ENCODE measurements at regions of chr2 and their contacts with region 1.

Region 1: GRCh38 chr2:143489145-143489544 is 359.9 kb downstream of the ARHGAP15 start:
- DNase-seq: no peak
- H3K4me3 ChIP-seq: no peak overlapping the region
- H3K27ac ChIP-seq: no peak overlapping the region
- H3K4me1 ChIP-seq: no peaks in the 10 kb centered on the region
- CTCF ChIP-seq: no peak

Region 2: DNA sequence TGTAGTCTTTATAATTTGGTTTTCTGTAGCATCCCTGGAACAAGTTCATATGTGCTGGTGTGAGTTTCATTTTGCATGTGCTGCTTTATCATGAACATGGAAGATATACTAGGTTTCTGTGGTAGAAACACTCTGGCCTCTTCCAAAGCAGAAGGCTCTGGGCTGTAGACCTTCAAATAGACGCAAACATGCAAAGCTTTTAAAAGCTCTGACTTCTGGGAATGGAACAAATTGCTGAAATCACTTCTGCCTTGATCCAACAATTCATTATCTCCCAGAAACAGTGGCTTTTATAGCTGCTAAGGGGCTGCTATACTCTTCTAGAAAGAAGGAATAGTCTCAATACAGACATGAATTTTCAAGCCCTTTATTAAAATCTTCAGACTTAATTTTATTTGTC is 1740.5 kb before region 1 on chr2:
- CTCF ChIA-PET with region 1: no interaction called
- POLR2A ChIA-PET with region 1: no interaction called
- intact Hi-C with region 1: loop called (anchors 10 kb)
- DNase-seq: no peak
- H3K4me3 ChIP-seq: no peak overlapping the region
- H3K27ac ChIP-seq: no peak overlapping the region
- H3K4me1 ChIP-seq: no peaks in the 10 kb centered on the region
- CTCF ChIP-seq: no peak

Region 3: DNA sequence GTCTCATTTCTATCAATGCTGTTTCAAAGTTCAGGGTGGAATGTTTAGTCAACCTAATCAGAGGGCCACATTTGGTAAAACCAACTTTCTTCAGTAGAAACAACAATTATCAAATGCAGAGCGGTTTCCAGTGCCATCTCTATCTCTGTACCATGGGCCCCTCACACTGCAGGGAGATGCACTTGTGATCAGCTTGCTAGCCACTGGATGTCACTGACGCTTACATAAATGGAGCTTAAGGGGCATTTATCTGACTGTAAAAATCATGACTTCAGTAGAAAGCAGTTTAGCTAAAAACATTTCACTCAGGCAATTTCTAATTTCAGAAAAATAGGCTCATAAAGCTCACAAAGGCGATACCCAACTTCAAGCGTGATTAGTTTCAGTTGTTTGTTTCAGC is 352.8 kb after region 1 on chr2:
- CTCF ChIA-PET with region 1: no interaction called
- POLR2A ChIA-PET with region 1: no interaction called
- intact Hi-C with region 1: no loop called
- DNase-seq: peak; percentile 15
- H3K4me3 ChIP-seq: no peak overlapping the region
- H3K27ac ChIP-seq: no peak overlapping the region
- H3K4me1 ChIP-seq: no peaks in the 10 kb centered on the region
- CTCF ChIP-seq: peak; percentile 53